CD8-positive, alpha-beta T cell (primary cell): ENCODE measurements at regions of chr5 and their contacts with region 1.

Region 1: GRCh38 chr5:5838493-5838892 is 416.0 kb downstream of the ICE1 start:
- DNase-seq: no peak
- ATAC-seq: no peak
- H3K4me3 ChIP-seq: no peak overlapping the region
- H3K4me3 Mint-ChIP-seq: no peak overlapping the region
- H3K27ac ChIP-seq: no peak overlapping the region
- H3K27ac Mint-ChIP-seq: no peak overlapping the region
- H3K4me1 ChIP-seq: no peaks in the 10 kb centered on the region
- H3K4me1 Mint-ChIP-seq: no peaks in the 10 kb centered on the region
- H3K27me3 ChIP-seq: no peaks in the 10 kb centered on the region
- H3K27me3 Mint-ChIP-seq: no peaks in the 10 kb centered on the region
- CTCF ChIP-seq: no peak

Region 2: GRCh38 chr5:6539048-6539447 is 700.6 kb after region 1 on chr5:
- CTCF ChIA-PET with region 1: no interaction called
- POLR2A ChIA-PET with region 1: no interaction called
- intact Hi-C with region 1: loop called in 1 of 2 experiments (anchors 2 kb)
- DNase-seq: no peak
- ATAC-seq: no peak
- H3K4me3 ChIP-seq: no peak overlapping the region
- H3K4me3 Mint-ChIP-seq: no peak overlapping the region
- H3K27ac ChIP-seq: no peak overlapping the region
- H3K27ac Mint-ChIP-seq: no peak overlapping the region
- H3K4me1 ChIP-seq: no peaks in the 10 kb centered on the region
- H3K4me1 Mint-ChIP-seq: no peaks in the 10 kb centered on the region
- H3K27me3 ChIP-seq: no peaks in the 10 kb centered on the region
- H3K27me3 Mint-ChIP-seq: peaks cover 21% of the 10 kb centered on the region
- CTCF ChIP-seq: no peak